K562 (cell line): ENCODE measurements at regions of chr2 and their contacts with region 1.

Region 1: GRCh38 chr2:26255759-26256384 is 11.1 kb downstream of the HADHB start:
- DNase-seq: no peak
- ATAC-seq: no peak
- H3K4me3 ChIP-seq: no peak overlapping the region
- H3K27ac ChIP-seq: no peak overlapping the region
- H3K4me1 ChIP-seq: no peaks in the 10 kb centered on the region
- H3K27me3 ChIP-seq: no peaks in the 10 kb centered on the region
- CTCF ChIP-seq: no peak
- EP300 ChIP-seq: no peak
- POLR2A ChIP-seq: no peak
- RAD21 ChIP-seq: no peak

Region 2: DNA sequence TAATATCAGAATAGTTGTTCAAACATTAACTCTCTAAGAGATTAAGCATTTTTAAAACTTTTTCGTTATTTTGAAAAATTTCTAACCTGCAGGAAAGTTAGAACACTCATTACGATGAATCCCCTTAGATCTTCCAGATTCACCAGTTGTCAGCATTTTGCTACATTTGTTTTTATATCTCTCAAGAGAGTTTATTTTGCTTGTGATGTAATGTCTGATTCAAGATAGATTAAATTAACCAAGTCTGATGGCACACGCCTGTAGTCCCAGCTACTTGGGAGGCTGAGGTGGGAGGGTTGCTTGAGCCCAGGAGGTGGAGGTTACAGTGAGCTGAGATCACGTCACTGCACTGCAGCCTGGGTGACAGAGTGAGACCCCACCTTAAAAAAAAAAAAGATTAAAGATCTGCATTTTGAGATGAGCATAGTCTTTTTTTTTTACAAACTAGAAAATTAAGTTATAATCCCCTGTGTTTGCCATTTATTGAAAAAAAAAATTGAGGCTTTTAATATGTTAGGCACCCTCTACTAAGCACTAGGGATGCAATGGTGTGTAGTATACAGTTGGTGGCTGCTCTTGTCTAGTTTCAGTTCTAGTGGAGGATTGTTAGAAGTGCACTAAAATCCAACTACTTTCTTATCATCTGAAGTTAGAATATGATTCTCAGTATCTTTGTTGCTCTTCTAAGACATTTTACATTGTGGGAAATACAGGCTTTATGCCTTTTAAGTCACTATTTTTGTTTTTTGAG is 201.1 kb before region 1 on chr2:
- CTCF ChIA-PET with region 1: no interaction called
- POLR2A ChIA-PET with region 1: no interaction called
- in situ Hi-C with region 1: no loop called
- intact Hi-C with region 1: no loop called
- DNase-seq: no peak
- ATAC-seq: peak; percentile 44
- H3K4me3 ChIP-seq: no peak overlapping the region
- H3K27ac ChIP-seq: 0 out of 3 replicates have a peak overlapping the region, but pooled peaks have one; percentile 4
- H3K4me1 ChIP-seq: peaks cover 20 to 24% of the 10 kb centered on the region in 2 experiments
- H3K27me3 ChIP-seq: no peaks in the 10 kb centered on the region
- CTCF ChIP-seq: no peak
- EP300 ChIP-seq: no peak
- POLR2A ChIP-seq: no peak
- RAD21 ChIP-seq: no peak

Region 3: GRCh38 chr2:26244309-26245121 is 11.4 kb before region 1 on chr2 and contains the starts of genes HADHA and HADHB:
- CTCF ChIA-PET with region 1: no interaction called
- POLR2A ChIA-PET with region 1: interaction called, 74 read pairs
- in situ Hi-C with region 1: no loop called
- intact Hi-C with region 1: no loop called
- DNase-seq: peak; percentile 90 to 93 (median 91)
- ATAC-seq: peak; percentile 85
- H3K4me3 ChIP-seq: peak within 1 kb of the TSS; percentile 82
- H3K27ac ChIP-seq: peak within 1 kb of the TSS; percentile 95
- H3K4me1 ChIP-seq: peaks cover 9 to 16% of the 10 kb centered on the region in 2 experiments; a peak in 3 of 5 replicates
- H3K27me3 ChIP-seq: no peaks in the 10 kb centered on the region
- CTCF ChIP-seq: peak; percentile 13 to 18 (median 14); a peak in 2 of 6 replicates
- EP300 ChIP-seq: peak; percentile 47
- POLR2A ChIP-seq: peak; percentile 91
- RAD21 ChIP-seq: 0 out of 4 replicates have a peak, but pooled peaks of 1 of the 2 experiments have one; percentile 4
- polyA plus RNA-seq, gene HADHA: 152 to 326 TPM
- polyA plus RNA-seq, gene HADHB: 198 to 199 TPM